Tibial artery (tissue), 4 donors: ENCODE measurements at regions of chr15 and their contacts with region 1.

Region 1: GRCh38 chr15:50633653-50634052 is 52.9 kb downstream of the TRPM7 start:
- DNase-seq: no peak
- H3K4me3 ChIP-seq: no peak overlapping the region
- H3K27ac ChIP-seq: no peak overlapping the region
- H3K4me1 ChIP-seq: no peaks in the 10 kb centered on the region
- H3K27me3 ChIP-seq: no peaks in the 10 kb centered on the region
- CTCF ChIP-seq: no peak

Region 2: DNA sequence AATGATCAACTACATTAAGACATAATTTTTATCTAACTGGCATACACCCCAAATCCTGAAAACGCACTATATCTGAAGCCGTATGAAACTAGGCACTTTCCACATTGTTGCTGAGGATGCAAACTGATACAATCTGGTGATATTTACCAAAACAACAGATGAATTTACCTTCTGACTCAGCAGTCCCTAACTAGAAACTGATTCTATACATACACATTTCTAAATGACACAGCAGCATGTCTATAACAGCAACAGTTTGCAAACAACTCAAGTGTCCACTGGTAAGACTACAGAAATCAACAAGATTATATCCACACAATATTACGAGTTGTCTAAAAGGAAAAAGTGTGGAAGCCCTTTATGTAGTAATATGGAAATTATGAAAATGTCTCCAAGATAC is 1610.3 kb before region 1 on chr15:
- intact Hi-C with region 1: no loop called
- DNase-seq: no peak
- H3K4me3 ChIP-seq: no peak overlapping the region
- H3K27ac ChIP-seq: no peak overlapping the region
- H3K4me1 ChIP-seq: no peaks in the 10 kb centered on the region
- H3K27me3 ChIP-seq: no peaks in the 10 kb centered on the region
- CTCF ChIP-seq: no peak

Region 3: DNA sequence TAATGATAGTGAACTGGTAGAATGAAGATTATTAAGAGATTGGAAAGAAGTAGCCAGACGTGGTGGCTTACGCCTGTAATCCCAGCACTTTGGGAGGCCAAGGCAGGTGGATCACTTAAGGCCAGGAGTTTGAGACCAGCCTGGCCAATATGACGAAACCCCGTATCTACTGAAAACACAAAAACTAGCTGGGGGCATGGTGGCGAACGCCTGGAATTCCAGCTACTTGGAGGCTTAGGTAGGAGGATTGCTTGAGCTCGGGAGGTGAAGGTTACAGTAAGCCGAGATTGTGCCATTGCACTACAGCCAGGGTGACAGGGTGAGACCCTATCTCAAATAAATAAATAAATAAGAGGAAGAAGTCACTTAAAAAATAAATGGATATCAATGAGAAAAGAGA is 195.4 kb before region 1 on chr15:
- intact Hi-C with region 1: no loop called
- DNase-seq: no peak
- H3K4me3 ChIP-seq: no peak overlapping the region
- H3K27ac ChIP-seq: no peak overlapping the region
- H3K4me1 ChIP-seq: no peaks in the 10 kb centered on the region
- H3K27me3 ChIP-seq: no peaks in the 10 kb centered on the region
- CTCF ChIP-seq: no peak

Region 4: GRCh38 chr15:50496692-50497091 is 137.0 kb before region 1 on chr15:
- intact Hi-C with region 1: loop called (anchors 10 kb)
- DNase-seq: no peak
- H3K4me3 ChIP-seq: no peak overlapping the region
- H3K27ac ChIP-seq: no peak overlapping the region
- H3K4me1 ChIP-seq: no peaks in the 10 kb centered on the region
- H3K27me3 ChIP-seq: no peaks in the 10 kb centered on the region
- CTCF ChIP-seq: no peak

Region 5: GRCh38 chr15:50686468-50687301 is 53.0 kb after region 1 on chr15 and contains the start of gene TRPM7:
- intact Hi-C with region 1: no loop called
- DNase-seq: peak; percentile 85 to 94
- H3K4me3 ChIP-seq: peak within 1 kb of the TSS; percentile 78 to 92
- H3K27ac ChIP-seq: peak within 1 kb of the TSS; percentile 88 to 91
- H3K4me1 ChIP-seq: peaks cover 0 to 33% (median 16%) of the 10 kb centered on the region in 4 donors
- H3K27me3 ChIP-seq: no peaks in the 10 kb centered on the region
- CTCF ChIP-seq: peak in 1 of 2 experiments; percentile 16

Region 6: DNA sequence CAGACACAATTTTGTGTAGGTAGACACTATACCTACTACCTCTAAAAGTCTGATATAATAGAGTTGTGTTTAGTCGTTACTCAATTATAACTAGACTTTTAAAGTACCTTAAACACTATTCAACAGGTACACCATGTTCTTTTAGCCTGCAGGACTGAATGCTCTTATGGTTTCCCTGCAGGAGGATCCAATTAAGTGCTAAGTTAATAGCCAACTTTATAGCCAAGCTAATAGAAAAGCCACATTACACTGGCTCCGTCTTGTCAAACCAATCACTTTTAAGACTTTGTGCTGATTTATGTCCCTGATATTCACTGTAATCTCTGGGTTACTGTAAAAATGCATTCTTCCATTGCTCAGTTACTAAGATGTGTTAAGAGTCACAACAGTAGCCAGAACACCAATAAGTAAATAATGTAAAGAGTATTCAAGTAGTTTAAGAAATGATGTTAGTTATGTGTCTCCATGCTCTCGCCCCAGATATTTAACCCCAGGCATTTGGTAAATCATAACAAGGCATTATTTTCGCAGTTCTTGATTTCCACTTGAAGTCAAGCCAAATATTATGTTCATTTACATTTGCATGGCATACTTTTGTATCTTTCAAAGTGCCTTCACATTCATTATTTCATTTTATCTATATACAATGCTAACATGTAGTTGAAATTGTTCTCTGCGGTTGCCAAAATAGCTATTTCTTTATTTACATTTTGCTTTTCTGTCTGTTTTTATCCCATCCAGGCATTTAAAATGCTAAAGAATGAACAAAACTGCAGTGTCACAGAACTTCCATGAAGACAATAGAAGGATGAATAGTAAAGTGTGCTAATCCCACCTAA is 232.1 kb after region 1 on chr15:
- intact Hi-C with region 1: no loop called
- DNase-seq: no peak
- H3K4me3 ChIP-seq: no peak overlapping the region
- H3K27ac ChIP-seq: no peak overlapping the region
- H3K4me1 ChIP-seq: no peaks in the 10 kb centered on the region
- H3K27me3 ChIP-seq: no peaks in the 10 kb centered on the region
- CTCF ChIP-seq: no peak